ENCODE measurements at regions of chr5 and their contacts with region 1.

Region 1: GRCh38 chr5:172106511-172107356 is 81.3 kb downstream of the STK10 start:
- DNase-seq: peak; percentile 71
- H3K4me3 Mint-ChIP-seq: no peak overlapping the region
- H3K27ac Mint-ChIP-seq: peak overlapping the region; percentile 50
- H3K4me1 Mint-ChIP-seq: peaks cover 40% of the 10 kb centered on the region
- H3K27me3 Mint-ChIP-seq: no peaks in the 10 kb centered on the region

Region 2: GRCh38 chr5:171961117-171961516 is 145.6 kb before region 1 on chr5:
- CTCF ChIA-PET with region 1: no interaction called
- intact Hi-C with region 1: loop called (anchors 1 kb)
- DNase-seq: peak; percentile 65
- H3K4me3 Mint-ChIP-seq: no peak overlapping the region
- H3K27ac Mint-ChIP-seq: peak overlapping the region; percentile 57
- H3K4me1 Mint-ChIP-seq: peaks cover 89% of the 10 kb centered on the region
- H3K27me3 Mint-ChIP-seq: no peaks in the 10 kb centered on the region

Region 3: DNA sequence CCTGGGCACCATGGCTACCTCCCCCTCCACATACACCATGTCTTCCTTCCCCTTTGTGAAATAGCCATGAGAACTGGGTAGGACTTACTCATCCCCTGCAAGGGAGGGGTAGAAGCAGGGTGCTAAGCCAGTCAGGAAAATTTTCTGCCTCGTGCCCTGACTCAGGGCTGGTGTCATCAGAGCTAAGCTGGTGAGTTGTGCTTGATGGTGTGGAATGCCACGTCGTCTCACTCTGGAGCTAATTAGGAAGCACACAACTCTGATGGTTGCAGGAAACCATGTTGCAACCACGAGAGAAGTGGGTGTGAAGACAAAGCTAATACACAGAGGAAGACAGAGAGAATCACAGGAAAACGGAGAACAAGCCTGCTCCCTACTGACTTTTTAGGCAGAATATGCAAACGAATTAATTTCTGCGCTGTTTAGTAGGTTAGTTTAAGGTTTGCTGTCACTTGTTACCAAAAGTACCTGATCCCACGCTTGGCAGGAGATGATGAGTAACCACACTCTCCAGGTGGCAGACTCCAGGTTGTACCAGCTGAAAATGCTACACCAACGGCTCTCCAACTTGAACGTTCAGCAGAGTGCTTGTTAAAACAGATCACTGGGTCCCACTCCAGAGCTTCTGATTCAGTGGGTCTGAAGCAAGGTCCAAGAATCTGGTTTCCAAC is 26.8 kb after region 1 on chr5:
- CTCF ChIA-PET with region 1: interaction called, 5 read pairs
- intact Hi-C with region 1: loop called (anchors 1 kb)
- DNase-seq: peak; percentile 86
- H3K4me3 Mint-ChIP-seq: peak overlapping the region; percentile 53
- H3K27ac Mint-ChIP-seq: peak overlapping the region; percentile 88
- H3K4me1 Mint-ChIP-seq: peaks cover 61% of the 10 kb centered on the region
- H3K27me3 Mint-ChIP-seq: no peaks in the 10 kb centered on the region

Region 4: DNA sequence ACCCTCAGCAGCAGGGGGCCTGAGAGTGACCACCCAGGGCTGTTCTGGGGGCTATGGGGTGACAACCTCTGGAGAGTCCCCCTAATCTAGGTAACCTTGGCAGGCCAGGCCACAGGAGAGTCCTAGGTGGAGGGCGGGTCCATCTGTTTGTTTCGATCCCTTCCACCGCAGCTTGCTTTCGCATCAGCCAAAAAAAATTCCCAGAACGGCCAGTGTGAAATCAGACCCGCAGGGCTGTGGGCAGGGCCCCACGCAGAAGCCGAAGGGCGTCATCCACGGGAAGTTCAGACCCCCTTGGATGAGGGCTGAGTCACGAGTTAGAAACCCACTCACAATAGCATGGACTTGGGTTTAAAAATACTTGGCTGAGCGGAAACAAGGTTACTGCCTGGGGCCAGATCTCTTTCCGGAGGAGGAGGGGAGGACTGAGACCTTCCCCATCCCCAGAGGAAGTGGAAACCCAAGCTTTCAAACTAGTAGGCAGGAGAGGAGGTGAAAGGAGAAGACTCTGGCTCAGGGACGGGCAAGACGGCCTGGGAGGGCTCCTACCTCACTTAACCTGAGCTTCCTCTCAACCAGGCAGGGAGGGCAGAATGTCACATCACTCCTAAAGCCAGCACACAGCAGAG is 72.7 kb after region 1 on chr5:
- CTCF ChIA-PET with region 1: interaction called, 159 read pairs
- intact Hi-C with region 1: loop called (anchors 1 kb)
- DNase-seq: peak; percentile 67
- H3K4me3 Mint-ChIP-seq: peak overlapping the region; percentile 70
- H3K27ac Mint-ChIP-seq: peak overlapping the region; percentile 94
- H3K4me1 Mint-ChIP-seq: peaks cover 92% of the 10 kb centered on the region
- H3K27me3 Mint-ChIP-seq: no peaks in the 10 kb centered on the region

Region 5: DNA sequence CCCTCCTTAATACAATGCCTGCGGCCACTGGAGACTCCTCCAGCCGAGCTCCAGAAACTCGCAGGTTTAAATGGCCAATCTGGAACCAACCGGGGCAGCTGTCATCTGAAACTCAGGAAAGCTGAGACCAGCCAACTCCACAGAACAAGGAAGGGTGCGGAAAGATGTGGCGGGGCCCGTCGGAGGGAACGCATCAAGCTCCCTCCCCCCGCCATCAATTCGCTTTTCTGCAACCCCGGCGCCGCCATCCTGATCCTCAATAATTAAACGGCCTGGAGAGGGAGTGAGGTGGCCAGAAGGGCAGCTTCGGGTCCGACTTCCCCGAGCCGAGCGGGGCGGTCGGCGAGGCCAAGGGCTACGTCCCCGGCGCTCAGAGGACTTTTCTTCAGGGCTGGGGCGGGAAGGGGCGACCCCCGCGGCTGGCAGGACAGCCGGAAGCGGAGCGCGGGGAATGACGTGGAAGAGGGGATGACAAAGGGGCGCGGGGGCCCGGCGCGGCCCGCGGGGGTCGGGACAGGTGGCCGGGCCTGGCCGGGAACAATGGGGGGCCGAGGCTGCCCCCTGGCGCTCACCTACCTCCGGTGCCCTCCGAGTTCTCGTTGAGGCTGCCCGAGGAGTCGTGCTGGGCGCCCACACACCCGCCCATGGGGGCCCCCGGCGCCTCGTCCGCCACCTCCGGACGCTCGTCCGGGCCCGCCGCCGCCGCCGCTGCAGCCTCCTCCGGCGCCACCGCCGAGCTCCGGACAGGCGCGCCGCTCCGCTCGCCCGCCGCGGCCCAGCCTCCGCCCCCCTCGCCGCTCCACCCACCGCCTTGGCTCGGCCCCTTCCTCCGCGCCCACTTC is 176.5 kb after region 1 on chr5 and contains the start of gene UBTD2:
- CTCF ChIA-PET with region 1: interaction called, 7 read pairs
- intact Hi-C with region 1: loop called (anchors 1 kb)
- DNase-seq: peak; percentile 70
- H3K4me3 Mint-ChIP-seq: peak within 1 kb of the TSS; percentile 81
- H3K27ac Mint-ChIP-seq: no peak within 1 kb of the TSS
- H3K4me1 Mint-ChIP-seq: peaks cover 19% of the 10 kb centered on the region
- H3K27me3 Mint-ChIP-seq: no peaks in the 10 kb centered on the region
- total RNA-seq, gene UBTD2: 2.3 to 2.6 TPM

Region 6: GRCh38 chr5:172697123-172698121 is 590.7 kb after region 1 on chr5:
- CTCF ChIA-PET with region 1: interaction called, 3 read pairs
- intact Hi-C with region 1: loop called (anchors 10 kb)
- DNase-seq: peak; percentile 91
- H3K4me3 Mint-ChIP-seq: peak overlapping the region; percentile 70
- H3K27ac Mint-ChIP-seq: peak overlapping the region; percentile 50
- H3K4me1 Mint-ChIP-seq: peaks cover 11% of the 10 kb centered on the region
- H3K27me3 Mint-ChIP-seq: peaks cover 10% of the 10 kb centered on the region

Measured in activated naive CD4-positive, alpha-beta T cell treated with anti-CD3 and anti-CD28 coated beads for 36 hours (primary cell).